ENCODE measurements at regions of chr6 and their contacts with region 1.

Region 1: GRCh38 chr6:56637640-56638039 is 5.0 kb downstream of the DST start:
- DNase-seq: peak in 1 of 4 donors; percentile 12
- ATAC-seq: peak; percentile 74
- H3K4me3 ChIP-seq: no peak overlapping the region
- H3K27ac ChIP-seq: no peak overlapping the region
- H3K4me1 ChIP-seq: no peaks in the 10 kb centered on the region
- H3K27me3 ChIP-seq: no peaks in the 10 kb centered on the region
- CTCF ChIP-seq: peak; percentile 12 to 74 (median 64)
- POLR2A ChIP-seq: no peak

Region 2: GRCh38 chr6:56437171-56437900 is 200.3 kb before region 1 on chr6:
- intact Hi-C with region 1: no loop called
- DNase-seq: no peak
- ATAC-seq: peak; percentile 69
- H3K4me3 ChIP-seq: no peak overlapping the region
- H3K27ac ChIP-seq: peak overlapping the region in 1 of 4 donors; percentile 21
- H3K4me1 ChIP-seq: peaks cover 29% of the 10 kb centered on the region
- H3K27me3 ChIP-seq: no peaks in the 10 kb centered on the region
- CTCF ChIP-seq: no peak
- POLR2A ChIP-seq: no peak

Region 3: DNA sequence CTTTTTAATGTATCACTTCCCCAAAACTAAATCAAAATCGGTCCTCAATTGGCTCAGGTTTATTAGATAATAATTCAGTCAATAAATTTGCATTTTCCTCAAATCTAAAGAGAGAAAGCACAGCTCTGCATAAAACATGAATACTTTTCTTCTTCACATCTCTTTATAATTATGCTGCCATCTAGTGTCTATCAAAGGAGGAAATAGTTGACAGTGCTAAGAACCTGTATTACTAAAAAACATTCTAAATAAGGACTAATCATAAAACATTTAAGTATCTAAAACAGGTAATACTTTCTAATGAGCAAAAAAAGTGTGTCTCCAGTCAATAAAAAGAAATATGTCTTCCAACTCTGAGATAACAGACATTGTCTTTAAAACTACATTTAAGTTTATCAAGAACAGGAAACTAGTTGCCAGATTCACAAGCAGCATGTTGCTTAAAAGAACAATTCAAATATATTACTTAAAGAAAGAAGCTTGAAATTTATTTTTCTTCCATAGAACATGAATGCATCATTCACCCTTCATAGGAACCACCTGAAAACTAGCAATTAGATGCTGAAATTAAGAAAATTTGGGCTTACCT is 61.5 kb after region 1 on chr6:
- intact Hi-C with region 1: loop called (anchors 10 kb)
- DNase-seq: no peak
- ATAC-seq: peak; percentile 71
- H3K4me3 ChIP-seq: no peak overlapping the region
- H3K27ac ChIP-seq: no peak overlapping the region
- H3K4me1 ChIP-seq: no peaks in the 10 kb centered on the region
- H3K27me3 ChIP-seq: no peaks in the 10 kb centered on the region
- CTCF ChIP-seq: peak in 6 of 7 experiments; percentile 38 to 65 (median 52)
- POLR2A ChIP-seq: no peak

Region 4: GRCh38 chr6:56851541-56852259 is 214.1 kb after region 1 on chr6:
- intact Hi-C with region 1: loop called (anchors 10 kb)
- DNase-seq: peak; percentile 23 to 60 (median 38)
- ATAC-seq: peak; percentile 84
- H3K4me3 ChIP-seq: no peak overlapping the region
- H3K27ac ChIP-seq: peak overlapping the region in 1 of 4 donors; percentile 18
- H3K4me1 ChIP-seq: peaks cover 6% of the 10 kb centered on the region
- H3K27me3 ChIP-seq: no peaks in the 10 kb centered on the region
- CTCF ChIP-seq: peak; percentile 13 to 69 (median 64)
- POLR2A ChIP-seq: peak in 1 of 3 donors; percentile 38

Region 5: DNA sequence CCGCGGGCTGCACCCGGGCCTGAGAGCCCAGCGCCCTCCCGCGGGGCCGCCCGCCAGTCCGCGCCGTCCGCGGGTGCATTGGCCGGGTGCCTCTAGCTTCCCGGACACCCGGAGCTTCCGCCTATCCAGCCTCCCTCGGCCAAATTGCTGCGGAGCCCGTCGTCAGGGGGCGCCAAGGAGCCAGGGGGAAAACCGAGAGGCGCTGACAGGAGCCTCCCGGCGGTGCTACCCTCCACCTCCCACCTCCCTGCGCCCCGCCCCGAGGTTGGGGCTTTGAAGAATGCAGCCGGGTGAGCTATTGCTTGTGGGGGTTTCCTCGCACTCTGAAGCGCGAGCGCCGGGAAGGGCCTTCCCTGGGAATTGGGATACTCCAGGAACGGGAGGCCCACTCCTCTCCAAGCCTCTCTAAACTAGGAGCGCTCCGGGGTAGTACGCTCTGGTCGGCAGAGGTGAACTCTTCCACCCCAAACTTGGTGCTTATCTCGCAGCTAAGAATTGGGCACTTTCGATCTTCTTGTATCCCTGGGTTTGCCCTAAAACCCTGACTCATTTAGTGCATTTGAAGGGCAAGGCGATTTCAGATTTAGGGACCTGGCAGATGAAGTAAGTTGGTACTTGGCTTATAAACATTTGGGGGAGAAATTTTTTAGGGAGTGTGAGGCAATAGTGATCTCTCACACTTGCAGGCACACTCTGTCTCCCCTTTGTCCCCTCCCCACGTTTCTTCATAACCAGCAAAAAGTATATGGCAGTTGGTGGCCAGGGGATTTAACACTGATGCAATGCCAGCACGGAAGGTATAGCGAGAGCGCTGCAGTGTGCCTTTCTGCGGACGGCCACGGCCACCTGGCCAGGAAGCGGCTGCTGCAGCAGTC is 317.8 kb after region 1 on chr6:
- intact Hi-C with region 1: no loop called
- DNase-seq: peak; percentile 62 to 78 (median 74)
- ATAC-seq: peak; percentile 84
- H3K4me3 ChIP-seq: no peak overlapping the region
- H3K27ac ChIP-seq: no peak overlapping the region
- H3K4me1 ChIP-seq: peaks cover 12% of the 10 kb centered on the region
- H3K27me3 ChIP-seq: peaks cover 0 to 5% of the 10 kb centered on the region in 2 donors
- CTCF ChIP-seq: peak; percentile 39 to 62 (median 53)
- POLR2A ChIP-seq: no peak

Measured in body of pancreas (tissue), 4 donors.